ENCODE measurements at regions of chr6 and their contacts with region 1.

Region 1: DNA sequence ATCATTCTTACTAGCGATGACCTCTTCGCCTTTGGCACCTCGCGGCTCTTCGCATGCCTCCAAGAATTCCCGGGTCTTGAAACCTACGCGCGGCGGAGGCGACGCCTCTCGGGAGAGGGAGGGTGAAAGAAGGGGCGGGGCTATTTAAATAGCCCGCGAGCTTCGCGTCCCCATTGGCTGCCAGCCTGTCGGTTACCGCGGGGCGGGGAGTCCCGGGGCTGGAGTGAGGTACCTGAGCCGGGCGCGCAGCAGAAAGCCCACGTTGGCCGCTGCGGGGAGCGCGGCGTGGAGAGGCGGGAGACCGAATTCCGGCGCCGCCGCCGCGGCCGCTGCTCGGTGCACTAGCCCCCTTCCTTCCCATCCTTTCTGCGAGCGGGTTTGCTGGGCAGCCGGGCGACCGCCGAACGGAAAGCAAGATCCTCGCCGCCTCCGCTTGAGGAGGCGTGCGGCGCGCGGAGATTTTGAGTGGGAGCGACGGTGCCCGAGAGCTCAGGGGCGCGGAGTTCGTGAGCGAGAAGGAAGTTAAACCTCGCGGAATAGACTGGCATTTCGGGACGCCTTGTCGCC is at the start of gene BMP6:
- DNase-seq: peak; percentile 87
- CTCF ChIP-seq: no peak

Region 2: GRCh38 chr6:7707787-7708186 is 18.1 kb before region 1 on chr6:
- CTCF ChIA-PET with region 1: interaction called, 15 read pairs
- POLR2A ChIA-PET with region 1: no interaction called
- DNase-seq: no peak
- CTCF ChIP-seq: no peak

Region 3: GRCh38 chr6:7747016-7747415 is 21.1 kb after region 1 on chr6:
- CTCF ChIA-PET with region 1: interaction called, 10 read pairs
- POLR2A ChIA-PET with region 1: no interaction called
- DNase-seq: no peak
- CTCF ChIP-seq: no peak

Region 4: GRCh38 chr6:8006208-8006607 is 280.3 kb after region 1 on chr6:
- CTCF ChIA-PET with region 1: interaction called, 14 read pairs
- POLR2A ChIA-PET with region 1: no interaction called
- DNase-seq: peak; percentile 43
- CTCF ChIP-seq: peak; percentile 30

Region 5: DNA sequence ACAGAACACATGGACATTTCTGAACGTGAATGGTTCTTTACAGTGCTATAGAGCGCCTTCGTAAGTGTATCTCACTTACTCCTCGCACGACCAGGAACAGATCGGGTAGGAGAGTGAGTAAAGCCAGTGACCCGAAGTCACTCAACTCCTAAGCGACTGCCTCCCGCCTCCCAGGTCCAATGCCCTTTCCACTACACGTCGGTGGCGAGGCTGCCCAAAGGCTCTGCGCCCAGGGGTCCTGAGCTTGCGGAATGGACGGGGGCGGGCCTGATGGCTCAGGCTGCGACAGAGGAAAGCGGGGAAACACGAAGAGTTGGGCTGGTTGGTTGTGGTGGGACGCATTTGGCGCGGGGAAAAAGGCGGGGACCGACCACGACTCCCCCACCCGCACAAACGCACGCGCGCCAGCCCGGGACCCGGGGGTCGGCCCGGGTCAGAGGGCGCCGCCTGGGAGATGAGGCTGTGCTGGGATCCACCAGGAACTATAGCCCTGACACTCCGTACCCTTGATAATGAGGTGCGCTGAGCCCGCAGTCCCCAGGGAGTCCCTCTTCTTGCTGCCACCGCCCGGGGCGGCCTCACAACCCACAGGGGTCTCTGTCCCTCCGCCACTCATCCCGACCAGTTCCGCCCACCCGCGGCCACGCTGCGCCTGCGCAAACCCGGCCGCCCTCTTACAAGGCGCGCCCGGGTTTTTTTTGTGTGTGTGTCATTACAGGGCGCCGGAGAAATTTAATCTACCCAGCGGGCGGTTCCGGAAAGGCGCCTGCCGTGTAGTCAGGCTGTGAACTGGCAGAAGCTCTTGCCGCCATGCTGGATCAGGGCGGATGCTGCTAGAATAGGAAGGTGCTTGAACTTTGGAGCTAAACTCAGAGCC is 338.1 kb after region 1 on chr6 and contains the start of gene BLOC1S5:
- CTCF ChIA-PET with region 1: interaction called, 59 read pairs
- POLR2A ChIA-PET with region 1: no interaction called
- DNase-seq: peak; percentile 90
- CTCF ChIP-seq: peak; percentile 6